Dorsolateral prefrontal cortex (tissue), 120 donors: ENCODE measurements at regions of chr2 and their contacts with region 1.

Region 1: DNA sequence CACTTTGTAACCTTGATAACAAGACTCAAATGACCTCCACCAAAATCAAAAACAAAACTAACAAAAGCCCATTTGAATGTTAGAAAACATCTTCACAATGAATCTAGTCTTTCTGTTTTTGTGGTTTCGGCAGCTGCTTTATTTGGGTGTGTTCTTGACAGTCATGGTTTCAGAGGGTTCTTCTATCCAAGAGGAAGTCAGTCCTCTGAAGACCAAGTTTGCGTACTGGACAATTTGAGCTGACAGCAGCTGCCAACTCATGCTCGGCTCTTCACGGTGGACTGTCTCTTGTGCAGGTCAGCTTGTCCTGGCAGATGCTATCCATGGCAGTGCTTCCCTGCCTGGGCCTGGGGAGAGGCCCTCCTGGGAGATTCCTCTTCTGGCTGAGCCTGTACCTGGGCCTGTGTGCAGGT is 91.0 kb downstream of the TMEM17 start:
- DNase-seq: no peak
- H3K4me3 ChIP-seq: peak overlapping the region in 24 of 59 donors; percentile 0 to 51 (median 20)
- H3K27ac ChIP-seq: peak overlapping the region in 58 of 59 donors; percentile 1 to 96 (median 80)
- H3K27me3 ChIP-seq: no peaks in the 10 kb centered on the region
- CTCF ChIP-seq: no peak

Region 2: DNA sequence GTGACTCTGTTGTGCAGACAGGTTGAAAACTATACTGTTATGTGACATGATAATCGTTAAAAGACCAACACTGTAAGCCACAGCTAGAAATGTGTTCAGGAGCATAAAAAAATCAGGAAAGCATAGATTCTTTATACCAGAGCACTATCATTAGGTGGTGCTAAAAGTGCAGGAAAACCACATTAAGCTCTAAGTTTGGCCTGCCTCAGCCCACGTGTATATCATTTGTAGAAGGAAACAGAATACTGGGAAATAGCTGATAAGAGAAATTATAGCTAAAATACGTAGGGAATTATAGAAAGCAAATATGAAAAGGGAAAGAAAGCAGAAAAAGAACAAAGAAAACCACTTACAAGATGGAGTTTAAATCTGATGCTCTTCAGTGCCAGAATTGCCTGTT is 1279.5 kb before region 1 on chr2:
- intact Hi-C with region 1: loop called in 1 of 2 experiments (anchors 10 kb)
- DNase-seq: peak in 2 of 10 donors; percentile 32 to 36
- H3K4me3 ChIP-seq: no peak overlapping the region
- H3K27ac ChIP-seq: peak overlapping the region in 19 of 59 donors; percentile 2 to 85 (median 56)
- H3K27me3 ChIP-seq: no peaks in the 10 kb centered on the region
- CTCF ChIP-seq: peak in 53 of 56 donors; percentile 26 to 74 (median 50)

Region 3: DNA sequence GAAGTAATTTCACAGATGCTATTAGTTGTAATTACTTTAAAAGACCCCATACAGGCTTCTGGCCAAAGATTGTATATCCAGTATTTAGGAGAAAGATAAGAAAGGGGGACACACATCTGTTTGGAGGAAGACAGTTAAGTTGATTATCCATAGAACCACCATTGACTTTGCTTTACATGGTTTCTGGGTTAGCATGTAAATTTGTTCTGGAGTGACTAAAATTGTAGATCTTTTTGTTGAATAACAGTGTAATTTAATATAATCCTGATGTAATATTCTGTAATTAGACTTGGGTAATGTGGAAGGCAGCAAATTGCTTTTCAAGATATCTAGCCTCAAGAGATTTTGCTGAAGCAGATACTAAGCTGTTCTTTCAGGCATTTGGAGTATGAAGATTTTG is 492.3 kb before region 1 on chr2:
- intact Hi-C with region 1: loop called (anchors 2 to 5 kb)
- DNase-seq: no peak
- H3K4me3 ChIP-seq: no peak overlapping the region
- H3K27ac ChIP-seq: no peak overlapping the region
- H3K27me3 ChIP-seq: no peaks in the 10 kb centered on the region
- CTCF ChIP-seq: no peak

Region 4: DNA sequence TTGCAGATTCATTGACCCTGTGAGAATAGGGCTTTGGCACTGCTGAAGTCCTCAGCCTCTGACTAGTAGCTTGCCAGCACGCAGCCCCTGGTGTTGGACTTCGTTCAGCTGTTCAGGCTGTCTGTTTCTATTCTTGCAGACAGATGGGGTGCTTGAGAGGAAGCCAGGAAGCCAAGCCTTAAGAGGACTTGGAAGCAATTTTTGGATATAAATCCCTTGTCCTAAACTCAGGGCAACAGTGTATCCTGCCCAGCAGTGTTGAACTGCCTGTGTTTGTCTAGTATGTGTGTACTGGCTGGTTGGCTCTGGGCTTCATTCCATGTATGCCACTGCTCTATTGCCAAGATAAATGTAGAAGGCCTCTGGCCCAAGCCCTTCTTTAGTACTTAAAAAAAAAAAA is 400.9 kb before region 1 on chr2:
- intact Hi-C with region 1: loop called in 1 of 2 experiments (anchors 5 kb)
- DNase-seq: peak in 9 of 10 donors; percentile 58 to 86 (median 72)
- H3K4me3 ChIP-seq: no peak overlapping the region
- H3K27ac ChIP-seq: peak overlapping the region in 5 of 59 donors; percentile 3 to 38 (median 31)
- H3K27me3 ChIP-seq: no peaks in the 10 kb centered on the region
- CTCF ChIP-seq: peak in 22 of 56 donors; percentile 7 to 41 (median 24)

Region 5: GRCh38 chr2:62456721-62457539 is 41.9 kb after region 1 on chr2:
- intact Hi-C with region 1: loop called in 1 of 2 experiments (anchors 5 kb)
- DNase-seq: peak; percentile 48 to 87 (median 66)
- H3K4me3 ChIP-seq: peak overlapping the region; percentile 49 to 96 (median 75)
- H3K27ac ChIP-seq: peak overlapping the region in 44 of 59 donors; percentile 1 to 88 (median 58)
- H3K27me3 ChIP-seq: no peaks in the 10 kb centered on the region
- CTCF ChIP-seq: peak; percentile 53 to 100 (median 97)